Adrenal gland (tissue), 19 donors: ENCODE measurements at regions of chr16 and their contacts with region 1.

Region 1: DNA sequence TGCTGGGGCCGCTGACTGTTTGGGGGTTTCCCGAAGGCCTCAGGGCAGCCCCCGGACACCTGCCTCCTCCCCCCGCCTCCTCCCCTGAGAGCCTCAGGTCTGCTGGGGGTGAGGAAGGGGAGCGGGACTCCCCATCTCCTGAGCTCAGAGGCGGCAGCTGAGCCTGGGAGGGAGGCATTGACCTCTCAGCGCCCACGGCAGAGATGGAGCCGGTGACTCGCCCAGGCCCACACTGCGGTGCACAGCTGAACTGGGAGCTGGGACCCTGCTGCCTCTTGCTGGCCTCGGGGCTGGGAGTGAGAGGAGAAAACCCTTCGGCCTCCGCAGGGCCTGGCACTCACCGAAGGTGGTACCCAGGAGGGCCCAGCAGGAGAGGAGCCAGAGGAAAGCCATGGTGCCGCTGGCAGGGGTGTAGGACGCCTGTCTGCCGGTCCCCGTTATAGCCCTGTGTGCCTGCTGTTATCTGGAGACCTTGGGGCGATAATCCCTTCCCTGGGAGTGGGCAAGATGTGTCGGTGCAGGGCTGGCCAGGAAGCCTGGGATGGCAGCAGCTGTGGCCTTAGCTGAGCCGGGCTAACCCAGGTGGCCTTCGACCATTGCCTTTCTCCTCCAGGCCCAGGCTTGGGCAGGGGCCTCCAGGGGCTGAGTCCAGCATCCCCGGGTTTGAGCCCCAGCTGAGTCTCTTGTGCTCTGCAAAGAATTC is at the start of gene CTRB2:
- DNase-seq: peak in 1 of 7 donors; percentile 32
- H3K4me3 ChIP-seq: no peak within 1 kb of the TSS
- H3K27ac ChIP-seq: no peak within 1 kb of the TSS
- H3K4me1 ChIP-seq: no peaks in the 10 kb centered on the region
- H3K27me3 ChIP-seq: no peaks in the 10 kb centered on the region
- CTCF ChIP-seq: no peak
- POLR2A ChIP-seq: no peak
- total RNA-seq, gene CTRB2: 1.5 to 15.1 (median 3.8) TPM in 5 of 9 donors, not detected in the others

Region 2: DNA sequence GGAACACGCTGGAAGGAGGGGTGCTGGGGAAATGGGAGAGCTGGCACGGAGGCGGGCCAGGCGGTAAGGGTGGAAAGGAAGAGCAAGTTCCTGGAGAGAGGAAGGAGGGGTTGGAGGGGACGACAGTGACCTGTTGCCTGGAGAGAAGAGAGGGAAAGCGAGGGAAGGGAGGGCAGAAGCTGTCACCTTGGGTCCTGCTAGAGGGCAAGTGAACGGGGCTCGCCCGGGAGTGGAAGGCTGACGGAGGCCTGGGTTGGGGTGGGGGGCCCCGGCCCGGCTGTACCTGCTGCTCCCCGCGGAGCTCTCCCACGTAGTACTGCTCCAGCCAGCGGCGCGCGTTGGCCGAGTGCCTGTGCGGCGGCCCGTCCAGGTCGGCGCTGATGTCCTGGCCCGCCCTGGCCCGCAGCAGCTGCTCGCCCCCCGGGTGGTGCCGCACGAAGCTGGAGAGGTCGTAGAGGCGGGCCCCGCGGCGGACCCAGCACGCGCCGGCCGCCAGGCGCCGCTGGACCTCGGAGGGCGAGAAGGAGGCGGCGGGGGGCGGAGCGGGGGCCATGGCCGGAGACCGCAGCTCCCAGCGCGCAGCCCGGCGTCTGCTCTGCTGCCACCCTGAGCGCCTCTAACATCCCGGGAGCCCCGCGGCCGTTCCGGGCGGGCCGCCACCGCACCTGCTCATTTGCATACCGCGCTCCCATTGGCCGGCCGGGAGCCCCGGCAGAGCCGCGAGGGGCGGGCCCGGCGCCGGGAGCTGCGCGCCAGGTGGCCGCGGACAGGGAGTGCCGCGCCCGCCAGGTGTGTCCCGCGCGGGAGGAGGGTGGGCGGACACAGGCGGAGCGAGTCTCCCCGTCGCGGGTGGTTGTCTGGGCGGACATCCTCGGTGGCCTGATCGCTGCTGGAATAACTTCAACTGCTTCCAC is 432.4 kb before region 1 on chr16 and contains the start of gene FA2H:
- intact Hi-C with region 1: no loop called
- DNase-seq: peak; percentile 80 to 89 (median 83)
- H3K4me3 ChIP-seq: peak within 1 kb of the TSS in 1 of 4 donors; percentile 61
- H3K27ac ChIP-seq: no peak within 1 kb of the TSS
- H3K4me1 ChIP-seq: peaks cover 6 to 15% of the 10 kb centered on the region in 2 donors
- H3K27me3 ChIP-seq: no peaks in the 10 kb centered on the region
- CTCF ChIP-seq: peak in 3 of 6 experiments; percentile 8 to 37 (median 31)
- POLR2A ChIP-seq: peak in 1 of 2 donors; percentile 50
- total RNA-seq, gene FA2H: 0.18 to 6.1 (median 0.39) TPM in 5 of 9 donors, not detected in the others

Region 3: GRCh38 chr16:75080205-75081029 is 126.5 kb before region 1 on chr16:
- intact Hi-C with region 1: no loop called
- DNase-seq: no peak
- H3K4me3 ChIP-seq: no peak overlapping the region
- H3K27ac ChIP-seq: no peak overlapping the region
- H3K4me1 ChIP-seq: peaks cover 0 to 3% of the 10 kb centered on the region in 2 donors
- H3K27me3 ChIP-seq: no peaks in the 10 kb centered on the region
- CTCF ChIP-seq: no peak
- POLR2A ChIP-seq: no peak

Region 4: GRCh38 chr16:75224306-75225091 is 17.6 kb after region 1 on chr16:
- intact Hi-C with region 1: loop called (anchors 1 to 2 kb)
- DNase-seq: no peak
- H3K4me3 ChIP-seq: no peak overlapping the region
- H3K27ac ChIP-seq: no peak overlapping the region
- H3K4me1 ChIP-seq: no peaks in the 10 kb centered on the region
- H3K27me3 ChIP-seq: no peaks in the 10 kb centered on the region
- CTCF ChIP-seq: no peak
- POLR2A ChIP-seq: no peak

Region 5: GRCh38 chr16:75238132-75238852 is 31.4 kb after region 1 on chr16:
- intact Hi-C with region 1: no loop called
- DNase-seq: peak; percentile 87 to 97 (median 94)
- H3K4me3 ChIP-seq: peak overlapping the region in 1 of 4 donors; percentile 2
- H3K27ac ChIP-seq: peak overlapping the region in 4 of 5 donors; percentile 68 to 95 (median 88)
- H3K4me1 ChIP-seq: peaks cover 18 to 34% of the 10 kb centered on the region in 2 donors
- H3K27me3 ChIP-seq: no peaks in the 10 kb centered on the region
- CTCF ChIP-seq: peak in 1 of 6 experiments; percentile 29
- POLR2A ChIP-seq: no peak